Activated naive CD4-positive, alpha-beta T cell treated with anti-CD3 and anti-CD28 coated beads for 36 hours (primary cell): ENCODE measurements at regions of chr2 and their contacts with region 1.

Region 1: GRCh38 chr2:151828143-151828889 is at the start of gene ARL5A:
- DNase-seq: peak; percentile 94
- H3K4me3 Mint-ChIP-seq: peak within 1 kb of the TSS; percentile 95
- H3K27ac Mint-ChIP-seq: peak within 1 kb of the TSS; percentile 82
- H3K4me1 Mint-ChIP-seq: peaks cover 39% of the 10 kb centered on the region
- H3K27me3 Mint-ChIP-seq: no peaks in the 10 kb centered on the region
- total RNA-seq, gene ARL5A: 40.6 to 43.7 TPM

Region 2: GRCh38 chr2:151106805-151107506 is 721.4 kb before region 1 on chr2:
- CTCF ChIA-PET with region 1: no interaction called
- intact Hi-C with region 1: no loop called
- DNase-seq: no peak
- H3K4me3 Mint-ChIP-seq: no peak overlapping the region
- H3K27ac Mint-ChIP-seq: no peak overlapping the region
- H3K4me1 Mint-ChIP-seq: no peaks in the 10 kb centered on the region
- H3K27me3 Mint-ChIP-seq: peaks cover 16% of the 10 kb centered on the region

Region 3: DNA sequence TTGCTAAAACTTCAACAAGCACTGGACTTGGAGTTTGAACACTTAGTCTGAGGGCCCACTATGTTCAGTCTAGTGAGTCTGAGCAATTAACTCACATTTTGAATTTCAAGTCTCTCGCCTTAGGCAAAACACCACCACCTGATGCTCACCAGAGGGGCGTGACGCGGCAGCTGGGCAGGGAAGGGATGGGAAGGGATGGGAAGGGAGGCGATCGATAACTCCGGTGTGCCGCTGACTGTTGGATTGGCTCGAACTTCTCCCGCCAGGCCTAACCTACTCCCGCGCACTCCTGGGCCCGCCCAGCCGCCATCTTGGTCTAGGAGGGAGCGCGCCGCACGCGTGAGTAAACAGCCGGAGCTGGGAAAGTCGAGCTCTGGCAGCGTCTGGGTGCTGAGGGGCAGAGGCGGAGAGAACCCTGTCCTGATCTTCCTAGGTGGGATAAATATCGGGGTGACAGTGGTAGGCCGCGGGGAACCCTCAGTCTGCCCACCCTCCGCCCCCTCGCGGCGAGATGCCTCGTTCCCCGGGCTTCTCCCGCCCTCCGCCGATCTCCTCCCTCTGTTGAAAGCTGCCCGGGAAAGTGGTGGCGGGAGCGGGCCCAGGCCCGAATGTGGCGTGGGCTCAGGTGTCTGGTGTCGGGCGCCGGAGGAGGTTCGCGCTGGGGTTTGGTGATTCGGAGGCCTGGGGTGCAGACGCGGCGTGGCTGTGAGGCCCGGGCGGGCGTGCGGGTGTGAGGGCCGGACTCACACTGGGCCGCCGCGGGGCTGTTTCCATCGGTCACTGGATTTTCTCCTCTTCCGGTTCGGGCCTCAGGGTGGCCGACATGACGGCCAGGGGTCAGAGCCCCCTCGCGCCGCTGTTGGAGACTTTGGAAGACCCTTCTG is 418.5 kb before region 1 on chr2 and contains the start of gene RIF1:
- CTCF ChIA-PET with region 1: no interaction called
- intact Hi-C with region 1: loop called (anchors 1 kb)
- DNase-seq: peak; percentile 88
- H3K4me3 Mint-ChIP-seq: peak within 1 kb of the TSS; percentile 100
- H3K27ac Mint-ChIP-seq: peak within 1 kb of the TSS; percentile 95
- H3K4me1 Mint-ChIP-seq: peaks cover 18% of the 10 kb centered on the region
- H3K27me3 Mint-ChIP-seq: no peaks in the 10 kb centered on the region
- total RNA-seq, gene RIF1: 53.0 TPM

Region 4: DNA sequence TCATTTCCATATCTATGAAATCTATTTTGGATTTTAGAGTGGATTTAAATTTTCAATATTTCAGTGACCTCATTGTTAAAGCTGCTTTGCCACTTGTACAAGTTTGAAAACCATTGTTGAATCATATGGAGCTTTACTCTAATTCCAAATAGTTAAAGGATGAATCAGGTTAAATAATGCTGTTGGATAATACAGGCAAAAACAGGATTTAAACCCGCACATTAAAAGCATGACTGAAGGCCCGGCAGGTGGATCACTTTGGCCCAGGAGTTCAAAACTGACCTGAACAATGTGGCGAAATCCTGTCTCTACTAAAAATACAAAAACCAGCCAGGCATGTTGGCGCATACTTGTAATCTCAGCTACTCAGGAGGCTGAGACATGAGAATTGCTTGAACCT is 350.3 kb before region 1 on chr2:
- CTCF ChIA-PET with region 1: no interaction called
- intact Hi-C with region 1: loop called (anchors 5 kb)
- DNase-seq: no peak
- H3K4me3 Mint-ChIP-seq: no peak overlapping the region
- H3K27ac Mint-ChIP-seq: no peak overlapping the region
- H3K4me1 Mint-ChIP-seq: peaks cover 18% of the 10 kb centered on the region
- H3K27me3 Mint-ChIP-seq: no peaks in the 10 kb centered on the region

Region 5: GRCh38 chr2:151840216-151841046 is 12.1 kb after region 1 on chr2:
- CTCF ChIA-PET with region 1: interaction called, 3 read pairs
- intact Hi-C with region 1: loop called (anchors 1 kb)
- DNase-seq: no peak
- H3K4me3 Mint-ChIP-seq: no peak overlapping the region
- H3K27ac Mint-ChIP-seq: no peak overlapping the region
- H3K4me1 Mint-ChIP-seq: no peaks in the 10 kb centered on the region
- H3K27me3 Mint-ChIP-seq: no peaks in the 10 kb centered on the region

Region 6: DNA sequence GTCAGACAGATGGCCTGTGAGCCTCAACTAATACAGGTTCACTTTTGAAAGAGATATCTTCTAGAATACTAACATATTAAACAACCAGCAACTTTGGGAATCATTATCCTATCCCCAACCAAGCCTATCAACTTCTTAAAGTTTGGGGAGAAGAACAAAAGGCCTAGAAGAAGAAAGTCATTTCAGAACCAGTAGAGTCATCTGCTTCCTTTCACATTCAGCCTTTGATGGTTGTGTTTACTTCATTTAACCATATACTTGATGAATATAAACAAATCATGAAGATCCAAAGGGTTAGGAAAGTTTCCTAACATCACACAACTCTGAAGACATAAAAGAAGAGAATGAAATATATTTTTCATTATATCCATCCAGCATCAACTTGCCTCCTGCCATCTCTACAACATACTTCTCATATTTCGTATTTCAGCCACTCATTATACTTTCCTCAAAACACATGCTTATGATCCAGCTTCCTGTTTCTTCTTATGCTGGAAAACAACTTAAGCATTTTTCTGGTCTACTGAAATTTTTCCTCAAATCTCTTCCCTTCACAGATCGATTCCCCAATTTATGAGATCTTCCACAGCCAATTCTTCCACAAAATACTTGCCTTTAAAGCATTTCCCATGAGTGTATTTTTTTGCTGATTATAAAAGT is 156.2 kb after region 1 on chr2:
- CTCF ChIA-PET with region 1: no interaction called
- intact Hi-C with region 1: no loop called
- DNase-seq: no peak
- H3K4me3 Mint-ChIP-seq: no peak overlapping the region
- H3K27ac Mint-ChIP-seq: no peak overlapping the region
- H3K4me1 Mint-ChIP-seq: no peaks in the 10 kb centered on the region
- H3K27me3 Mint-ChIP-seq: no peaks in the 10 kb centered on the region

Region 7: GRCh38 chr2:152005607-152006006 is 177.3 kb after region 1 on chr2:
- CTCF ChIA-PET with region 1: interaction called, 3 read pairs
- intact Hi-C with region 1: loop called (anchors 2 kb)
- DNase-seq: no peak
- H3K4me3 Mint-ChIP-seq: no peak overlapping the region
- H3K27ac Mint-ChIP-seq: no peak overlapping the region
- H3K4me1 Mint-ChIP-seq: peaks cover 10% of the 10 kb centered on the region
- H3K27me3 Mint-ChIP-seq: no peaks in the 10 kb centered on the region